ENCODE measurements at regions of chr5 and their contacts with region 1.

Region 1: GRCh38 chr5:142548739-142549275 is 137.1 kb downstream of the FGF1 start:
- DNase-seq: peak; percentile 43 to 44
- ATAC-seq: peak; percentile 99

Region 2: GRCh38 chr5:142151436-142152383 is 397.1 kb before region 1 on chr5:
- intact Hi-C with region 1: loop called (anchors 5 kb)
- DNase-seq: peak in 1 of 2 donors; percentile 59
- ATAC-seq: peak; percentile 75

Region 3: DNA sequence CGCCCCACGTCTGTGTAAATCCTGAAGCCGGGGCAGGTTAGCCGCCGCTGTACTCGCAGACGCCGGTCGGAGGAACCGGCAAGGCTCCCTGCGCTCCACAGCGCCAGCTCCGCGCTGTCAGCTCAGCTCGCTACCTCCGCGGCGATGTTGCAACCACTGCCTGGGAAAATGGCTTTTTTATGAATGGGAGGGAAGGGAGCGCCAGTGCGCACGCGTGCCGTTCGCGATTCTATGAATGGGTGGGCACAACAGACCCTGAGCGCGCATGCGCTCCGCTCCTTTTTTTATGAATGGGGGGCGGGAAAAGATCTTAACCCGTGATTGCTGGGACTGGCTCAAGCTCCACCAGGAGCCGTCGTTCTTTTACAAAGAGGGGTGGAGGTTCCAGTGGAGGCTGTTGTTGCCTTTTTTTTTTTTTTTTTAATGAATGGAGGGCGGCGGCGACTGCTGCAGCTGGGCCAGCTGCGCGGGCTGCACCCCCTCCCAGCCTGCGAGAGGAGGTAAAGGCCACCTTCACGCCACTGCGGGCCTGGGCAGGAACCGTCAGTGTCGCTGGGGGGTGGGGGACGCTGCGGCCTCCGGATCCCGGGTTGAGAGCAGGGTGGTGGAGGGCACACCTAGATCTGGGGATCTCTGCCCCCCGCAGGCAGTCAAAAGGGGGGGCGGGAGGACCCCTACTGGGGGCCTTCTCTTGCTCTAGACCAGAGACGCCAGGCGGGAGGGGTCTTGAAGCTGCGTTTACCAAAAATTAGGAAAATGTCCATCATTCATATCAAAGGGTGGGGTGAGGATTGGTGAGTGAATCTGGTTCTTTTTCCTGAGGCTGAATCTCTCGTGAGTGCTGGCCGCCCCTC is 223.7 kb before region 1 on chr5 and contains the start of gene SPRY4:
- intact Hi-C with region 1: loop called in 1 of 2 experiments (anchors 10 kb)
- DNase-seq: peak; percentile 91
- ATAC-seq: peak; percentile 75
- total RNA-seq, gene SPRY4: 9.5 to 9.7 TPM

Region 4: GRCh38 chr5:143448518-143448917 is 899.7 kb after region 1 on chr5:
- intact Hi-C with region 1: no loop called
- DNase-seq: no peak
- ATAC-seq: no peak